Ovary (tissue), 10 donors: ENCODE measurements at regions of chr5 and their contacts with region 1.

Region 1: DNA sequence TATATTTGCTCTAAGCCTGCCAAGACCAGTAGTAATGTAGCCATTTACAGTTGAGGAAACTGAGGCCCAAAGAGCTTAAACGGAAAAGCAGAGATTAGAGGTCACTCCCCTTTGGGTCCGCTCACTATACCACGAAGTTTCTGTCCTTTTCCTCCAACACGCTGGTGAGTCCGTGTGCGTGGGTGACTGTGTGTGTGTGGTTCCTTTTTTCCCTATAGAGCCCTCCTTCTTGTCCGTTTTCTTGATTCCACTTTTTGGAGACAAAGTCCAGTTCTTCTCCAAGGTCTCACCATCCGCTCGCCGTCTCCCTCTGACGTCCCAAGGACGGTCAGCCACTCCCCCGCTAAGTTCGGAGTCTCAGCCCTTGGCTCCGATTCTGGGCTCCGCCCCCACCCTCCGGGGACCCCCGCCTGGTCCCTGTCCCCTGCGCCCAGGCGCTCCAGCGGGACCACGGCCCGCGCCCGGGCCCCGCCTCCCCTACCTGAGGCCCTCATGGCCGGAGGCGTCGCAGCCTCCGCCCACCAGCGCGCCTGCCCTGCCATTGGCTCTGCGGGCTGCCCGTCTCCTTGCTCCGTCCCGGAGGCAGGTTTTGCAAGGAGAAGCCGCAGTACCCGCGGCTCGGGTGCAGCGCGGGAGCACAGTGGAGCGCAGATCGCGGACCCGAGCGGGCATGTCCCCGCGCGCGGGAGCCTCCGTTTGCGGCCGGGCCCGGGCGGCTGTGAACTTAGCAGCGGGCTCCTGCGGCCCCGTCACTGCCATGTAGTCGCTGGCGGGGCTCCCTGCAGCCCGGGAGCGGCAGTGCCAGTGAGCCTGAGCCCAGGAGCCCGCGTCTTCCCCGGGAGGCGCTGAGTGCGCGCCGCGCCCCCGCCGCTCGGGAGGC is at the start of gene MAST4:
- DNase-seq: peak; percentile 95 to 98 (median 96)
- H3K4me3 ChIP-seq: peak within 1 kb of the TSS; percentile 71
- H3K27ac ChIP-seq: peak within 1 kb of the TSS; percentile 64 to 76
- H3K4me1 ChIP-seq: peaks cover 10% of the 10 kb centered on the region
- H3K27me3 ChIP-seq: no peaks in the 10 kb centered on the region
- CTCF ChIP-seq: no peak
- EP300 ChIP-seq: no peak
- POLR2A ChIP-seq: peak; percentile 90
- total RNA-seq, gene MAST4: 55.3 to 86.3 (median 59.9) TPM

Region 2: DNA sequence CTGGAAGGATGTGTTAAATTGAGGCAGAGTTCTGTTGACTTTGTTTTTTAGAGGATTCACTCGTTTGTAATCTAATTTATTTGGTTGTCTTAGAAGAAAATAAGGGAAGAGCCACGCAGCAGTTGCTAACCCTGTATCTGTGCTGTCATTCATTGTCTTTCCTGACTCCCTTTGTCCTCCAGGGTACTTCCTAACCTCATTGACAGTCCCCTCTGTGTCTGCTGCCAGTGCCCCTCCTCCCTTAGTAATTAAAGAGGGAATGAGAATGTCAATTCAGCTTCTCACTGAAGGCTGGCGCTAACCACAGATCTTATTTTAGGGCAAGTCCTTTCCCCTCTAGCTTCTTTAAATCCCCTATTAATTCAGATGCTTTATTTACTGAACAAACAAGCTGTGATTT is 84.2 kb after region 1 on chr5:
- intact Hi-C with region 1: no loop called
- DNase-seq: no peak
- H3K4me3 ChIP-seq: no peak overlapping the region
- H3K27ac ChIP-seq: no peak overlapping the region
- H3K4me1 ChIP-seq: peaks cover 1% of the 10 kb centered on the region
- H3K27me3 ChIP-seq: no peaks in the 10 kb centered on the region
- CTCF ChIP-seq: no peak
- EP300 ChIP-seq: no peak
- POLR2A ChIP-seq: no peak

Region 3: GRCh38 chr5:66742083-66742895 is 146.3 kb after region 1 on chr5:
- intact Hi-C with region 1: loop called in 2 of 4 experiments (anchors 5 kb)
- DNase-seq: peak; percentile 29 to 61 (median 45)
- H3K4me3 ChIP-seq: no peak overlapping the region
- H3K27ac ChIP-seq: no peak overlapping the region
- H3K4me1 ChIP-seq: peaks cover 10% of the 10 kb centered on the region
- H3K27me3 ChIP-seq: no peaks in the 10 kb centered on the region
- CTCF ChIP-seq: peak in 1 of 3 donors; percentile 30
- EP300 ChIP-seq: no peak
- POLR2A ChIP-seq: no peak